Endothelial cell of umbilical vein (primary cell): ENCODE measurements at regions of chr15 and their contacts with region 1.

Region 1: GRCh38 chr15:37100109-37100965 is at the start of gene MEIS2:
- DNase-seq: peak; percentile 87
- H3K4me3 ChIP-seq: peak within 1 kb of the TSS; percentile 89 to 95 (median 92)
- H3K27ac ChIP-seq: peak within 1 kb of the TSS; percentile 83
- H3K4me1 ChIP-seq: peaks cover 22% of the 10 kb centered on the region
- H3K27me3 ChIP-seq: peaks cover 12 to 30% of the 10 kb centered on the region in 2 experiments
- CTCF ChIP-seq: no peak
- POLR2A ChIP-seq: no peak
- total RNA-seq, gene MEIS2: 22.5 and 27.1 TPM in 2 replicates

Region 2: DNA sequence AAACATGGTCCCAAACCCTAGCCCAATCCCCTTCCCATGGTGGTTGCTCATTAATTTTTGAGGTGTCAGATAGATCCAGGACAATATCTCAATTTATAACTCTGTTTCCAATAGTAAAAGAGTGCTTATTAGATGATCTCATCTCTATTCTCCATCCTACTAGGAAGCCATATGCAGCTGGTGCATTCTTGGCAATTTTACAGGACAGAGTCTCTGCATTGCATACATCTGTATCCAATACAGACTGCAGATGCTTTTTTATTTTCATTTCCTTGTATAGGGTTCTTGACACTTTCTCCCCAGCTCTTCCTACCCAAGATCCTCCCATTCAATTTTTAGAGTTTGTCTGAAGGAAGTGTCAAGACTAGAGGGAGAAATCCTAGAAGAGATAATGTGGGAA is 1359.6 kb before region 1 on chr15:
- CTCF ChIA-PET with region 1: no interaction called
- POLR2A ChIA-PET with region 1: no interaction called
- dilution Hi-C with region 1: no loop called
- intact Hi-C with region 1: loop called (anchors 5 kb)
- DNase-seq: peak; percentile 36
- H3K4me3 ChIP-seq: no peak overlapping the region
- H3K27ac ChIP-seq: no peak overlapping the region
- H3K4me1 ChIP-seq: peaks cover 31% of the 10 kb centered on the region
- H3K27me3 ChIP-seq: no peaks in the 10 kb centered on the region
- CTCF ChIP-seq: no peak
- POLR2A ChIP-seq: no peak

Region 3: DNA sequence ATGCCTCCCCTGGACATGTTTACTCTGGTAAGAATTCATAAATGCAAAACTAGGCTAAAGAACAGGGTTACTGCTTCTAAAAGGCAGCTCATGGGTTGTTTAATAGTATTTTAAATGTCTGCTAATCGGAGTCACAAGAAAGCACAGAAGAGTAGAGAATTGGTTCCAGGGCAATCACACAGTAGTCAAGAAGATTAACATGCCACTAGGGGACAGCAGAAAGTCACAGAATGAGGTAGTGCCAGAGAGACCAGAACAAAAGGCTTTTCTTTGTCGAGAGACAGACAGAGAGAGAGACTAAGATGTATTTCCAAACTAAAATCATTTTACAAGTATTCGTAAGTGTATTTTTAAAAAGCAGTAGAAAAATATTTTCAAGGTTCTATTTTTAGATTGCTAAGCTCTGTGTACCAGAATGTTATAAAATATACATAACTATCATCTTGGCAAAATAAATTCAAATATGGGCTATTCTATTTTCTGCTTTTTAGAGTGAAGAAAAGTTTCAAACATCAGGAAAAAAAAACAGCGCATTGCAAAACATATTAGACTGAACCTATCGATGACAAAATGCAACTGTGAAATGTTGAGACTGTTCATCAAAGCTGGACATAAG is 599.2 kb before region 1 on chr15:
- CTCF ChIA-PET with region 1: interaction called, 5 read pairs
- POLR2A ChIA-PET with region 1: no interaction called
- dilution Hi-C with region 1: no loop called
- intact Hi-C with region 1: loop called (anchors 10 kb)
- DNase-seq: peak; percentile 69
- H3K4me3 ChIP-seq: no peak overlapping the region
- H3K27ac ChIP-seq: no peak overlapping the region
- H3K4me1 ChIP-seq: peaks cover 4% of the 10 kb centered on the region
- H3K27me3 ChIP-seq: no peaks in the 10 kb centered on the region
- CTCF ChIP-seq: peak; percentile 55 to 64
- POLR2A ChIP-seq: no peak

Region 4: GRCh38 chr15:36883713-36884517 is 216.4 kb before region 1 on chr15:
- CTCF ChIA-PET with region 1: interaction called, 53 read pairs
- POLR2A ChIA-PET with region 1: no interaction called
- dilution Hi-C with region 1: no loop called
- intact Hi-C with region 1: loop called (anchors 1 kb)
- DNase-seq: peak; percentile 79
- H3K4me3 ChIP-seq: no peak overlapping the region
- H3K27ac ChIP-seq: no peak overlapping the region
- H3K4me1 ChIP-seq: peaks cover 11% of the 10 kb centered on the region
- H3K27me3 ChIP-seq: peaks cover 90 to 99% of the 10 kb centered on the region in 2 experiments
- CTCF ChIP-seq: peak; percentile 72 to 91
- POLR2A ChIP-seq: no peak

Region 5: DNA sequence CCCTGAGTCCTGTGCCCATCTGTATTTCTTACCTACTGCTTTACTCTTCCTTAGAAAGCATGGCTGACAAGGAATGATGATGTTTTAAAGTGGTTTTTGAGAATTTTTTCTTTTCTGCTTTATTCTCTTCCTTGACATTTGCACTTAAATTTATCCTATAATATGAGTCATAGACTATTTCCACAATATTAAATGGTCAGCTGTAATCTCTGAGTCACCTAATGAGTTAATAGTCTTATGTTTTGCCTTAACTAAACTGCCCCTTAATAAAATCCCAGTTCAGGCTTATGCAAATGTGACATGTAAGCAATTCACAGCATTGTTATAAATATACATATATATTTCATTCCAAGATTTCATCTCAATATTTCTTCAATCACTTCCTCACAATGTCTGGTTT is 23.8 kb before region 1 on chr15:
- CTCF ChIA-PET with region 1: no interaction called
- POLR2A ChIA-PET with region 1: no interaction called
- dilution Hi-C with region 1: no loop called
- intact Hi-C with region 1: no loop called
- DNase-seq: peak; percentile 45
- H3K4me3 ChIP-seq: no peak overlapping the region
- H3K27ac ChIP-seq: no peak overlapping the region
- H3K4me1 ChIP-seq: peaks cover 7% of the 10 kb centered on the region
- H3K27me3 ChIP-seq: no peaks in the 10 kb centered on the region
- CTCF ChIP-seq: no peak
- POLR2A ChIP-seq: no peak

Region 6: DNA sequence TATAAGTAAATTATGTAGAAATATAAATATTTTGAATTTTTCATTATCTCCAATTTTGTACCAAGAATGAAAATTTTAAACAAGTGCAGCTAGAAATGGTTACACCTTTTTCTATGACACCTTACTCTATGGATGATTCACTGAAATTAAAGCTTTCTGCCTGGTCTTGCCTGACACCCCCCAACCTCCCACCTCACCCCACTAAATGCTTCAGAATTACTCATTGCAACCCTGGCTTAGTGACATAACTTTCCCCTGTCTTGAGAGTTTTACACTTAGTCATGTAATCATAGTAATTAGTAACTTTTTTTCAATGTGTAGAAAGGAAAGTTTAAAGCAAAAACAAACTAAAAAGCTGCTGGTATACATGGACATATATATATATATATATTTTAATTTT is 42.0 kb after region 1 on chr15:
- CTCF ChIA-PET with region 1: no interaction called
- POLR2A ChIA-PET with region 1: no interaction called
- dilution Hi-C with region 1: no loop called
- intact Hi-C with region 1: no loop called
- DNase-seq: no peak
- H3K4me3 ChIP-seq: no peak overlapping the region
- H3K27ac ChIP-seq: no peak overlapping the region
- H3K4me1 ChIP-seq: no peaks in the 10 kb centered on the region
- H3K27me3 ChIP-seq: peaks cover 8 to 20% of the 10 kb centered on the region in 2 experiments
- CTCF ChIP-seq: no peak
- POLR2A ChIP-seq: no peak

Region 7: GRCh38 chr15:37289109-37289765 is 188.9 kb after region 1 on chr15:
- CTCF ChIA-PET with region 1: no interaction called
- POLR2A ChIA-PET with region 1: no interaction called
- dilution Hi-C with region 1: no loop called
- intact Hi-C with region 1: no loop called
- DNase-seq: no peak
- H3K4me3 ChIP-seq: no peak overlapping the region
- H3K27ac ChIP-seq: no peak overlapping the region
- H3K4me1 ChIP-seq: no peaks in the 10 kb centered on the region
- H3K27me3 ChIP-seq: no peaks in the 10 kb centered on the region
- CTCF ChIP-seq: no peak
- POLR2A ChIP-seq: no peak

Region 8: DNA sequence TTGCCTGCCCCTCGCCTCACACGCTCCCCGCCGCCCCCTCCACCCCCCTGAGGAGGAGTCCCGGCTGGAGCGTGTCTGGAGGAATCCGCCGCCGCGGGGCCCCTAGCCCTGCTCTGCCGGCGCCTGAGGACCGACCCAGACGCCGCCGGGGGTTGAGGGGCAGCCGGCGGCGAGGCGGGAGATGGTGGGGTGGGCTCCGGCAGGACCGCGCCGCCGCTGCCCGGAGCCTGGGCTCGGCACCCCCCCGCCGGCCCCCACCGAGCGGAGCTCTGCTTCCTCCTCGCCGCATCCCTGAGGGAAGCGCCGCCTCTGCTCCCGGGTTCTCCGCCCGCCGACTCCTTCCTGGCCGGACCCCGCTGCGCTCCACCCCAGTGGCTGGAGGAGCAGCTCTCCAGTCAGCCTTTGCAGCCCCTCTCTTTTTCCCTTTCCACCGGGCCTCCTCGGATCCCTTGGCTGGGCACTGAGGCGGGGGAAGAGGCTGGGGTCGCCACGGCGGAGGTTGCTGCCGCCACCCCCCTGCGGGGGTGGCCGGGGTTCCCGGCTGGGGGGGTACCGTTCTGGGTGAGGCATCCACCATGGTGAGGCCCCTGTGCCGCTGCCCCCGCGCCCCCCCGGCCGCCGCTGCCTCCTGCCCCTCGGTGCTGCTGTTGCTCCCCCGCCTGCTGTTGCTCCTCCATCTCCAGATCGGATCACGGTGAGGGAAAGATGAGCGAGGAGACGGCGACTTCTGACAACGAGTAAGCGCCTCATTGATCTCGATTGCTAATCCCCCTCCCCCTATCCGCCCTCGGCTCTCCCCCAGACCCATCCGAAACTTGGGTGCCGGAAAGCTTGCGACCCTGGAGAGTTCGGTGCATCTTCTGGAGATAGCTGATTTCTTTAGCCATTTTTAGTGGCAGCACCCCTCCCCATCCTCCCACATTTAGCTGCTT is 1152.4 kb after region 1 on chr15 and contains the start of gene SPRED1:
- CTCF ChIA-PET with region 1: no interaction called
- POLR2A ChIA-PET with region 1: no interaction called
- dilution Hi-C with region 1: no loop called
- intact Hi-C with region 1: loop called (anchors 5 kb)
- DNase-seq: peak; percentile 69
- H3K4me3 ChIP-seq: peak within 1 kb of the TSS; percentile 77 to 95 (median 91)
- H3K27ac ChIP-seq: peak within 1 kb of the TSS; percentile 69
- H3K4me1 ChIP-seq: peaks cover 22% of the 10 kb centered on the region
- H3K27me3 ChIP-seq: peaks cover 5 to 9% of the 10 kb centered on the region in 2 experiments
- CTCF ChIP-seq: no peak
- POLR2A ChIP-seq: no peak
- total RNA-seq, gene SPRED1: 10.7 and 16.4 TPM in 2 replicates